HEK293 (cell line): ENCODE measurements at regions of chr12 and their contacts with region 1.

Region 1: DNA sequence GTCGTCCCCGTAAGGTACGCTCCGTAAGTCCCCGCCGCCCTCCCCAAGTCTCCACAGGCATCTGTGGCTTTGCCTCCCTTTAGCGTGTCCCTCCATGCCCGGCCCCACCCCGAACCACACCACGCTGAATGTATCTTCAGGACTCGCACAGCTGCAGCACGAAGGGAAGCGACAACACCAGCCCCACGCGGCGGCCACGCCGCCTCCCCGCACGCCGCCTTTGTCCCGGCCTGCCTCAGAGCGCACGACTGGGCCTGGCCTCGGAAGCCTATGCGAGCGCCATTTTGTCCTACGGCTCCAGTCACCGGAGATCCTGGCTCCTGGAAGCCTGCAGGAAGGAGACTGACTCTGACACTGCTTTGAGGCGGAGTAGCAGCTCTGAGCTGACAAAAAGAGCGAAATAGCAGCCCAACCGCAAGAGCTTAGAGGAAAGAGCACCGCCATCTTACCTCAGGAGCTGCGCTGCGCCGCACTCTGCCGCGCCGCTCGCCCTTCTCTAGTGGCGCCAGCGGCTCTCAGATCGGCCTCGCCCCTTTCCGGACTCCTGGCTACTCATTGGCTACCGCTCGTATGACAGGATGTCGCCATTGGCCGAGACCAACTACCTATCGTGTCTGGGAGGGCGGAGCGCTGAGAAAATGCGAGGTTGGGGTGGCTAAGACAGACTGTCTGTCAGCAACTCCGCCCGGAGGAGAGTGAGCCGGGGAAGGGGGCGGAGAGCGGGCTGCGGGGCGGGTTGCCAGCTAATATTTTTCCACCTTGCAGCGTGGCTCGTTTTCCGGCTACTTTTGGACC is at the start of gene KANSL2:
- H3K4me3 ChIP-seq: peak within 1 kb of the TSS; percentile 94
- H3K27ac ChIP-seq: peak within 1 kb of the TSS; percentile 70
- H3K4me1 ChIP-seq: no peaks in the 10 kb centered on the region; the same call in none of the 2 replicates
- CTCF ChIP-seq: peak; percentile 60; the same call in 1 of the 2 replicates

Region 2: GRCh38 chr12:48671231-48671856 is 10.6 kb before region 1 on chr12:
- CTCF ChIA-PET with region 1: interaction called, 6 read pairs
- POLR2A ChIA-PET with region 1: interaction called, 18 read pairs
- H3K4me3 ChIP-seq: no peak overlapping the region
- H3K27ac ChIP-seq: no peak overlapping the region
- H3K4me1 ChIP-seq: no peaks in the 10 kb centered on the region
- CTCF ChIP-seq: no peak

Region 3: GRCh38 chr12:49188201-49188913 is 506.4 kb after region 1 on chr12:
- CTCF ChIA-PET with region 1: no interaction called
- POLR2A ChIA-PET with region 1: no interaction called
- H3K4me3 ChIP-seq: peak overlapping the region; percentile 86
- H3K27ac ChIP-seq: peak overlapping the region; percentile 94
- H3K4me1 ChIP-seq: peaks cover 6% of the 10 kb centered on the region; the same call in 1 of the 2 replicates
- CTCF ChIP-seq: peak; percentile 59